Ascending aorta (tissue), 2 donors: ENCODE measurements at regions of chr7 and their contacts with region 1.

Region 1: GRCh38 chr7:30851651-30852307 is 59.9 kb upstream of the AQP1 start:
- DNase-seq: peak; percentile 64 to 93
- H3K4me3 ChIP-seq: peak overlapping the region; percentile 7 to 46
- H3K27ac ChIP-seq: peak overlapping the region; percentile 98
- H3K4me1 ChIP-seq: peaks cover 15 to 57% of the 10 kb centered on the region in 2 donors
- H3K27me3 ChIP-seq: no peaks in the 10 kb centered on the region
- CTCF ChIP-seq: no peak

Region 2: GRCh38 chr7:30750683-30751650 is 100.8 kb before region 1 on chr7:
- intact Hi-C with region 1: no loop called
- DNase-seq: peak in 1 of 2 donors; percentile 88
- H3K4me3 ChIP-seq: peak overlapping the region in 1 of 2 donors; percentile 71
- H3K27ac ChIP-seq: peak overlapping the region; percentile 81 to 91
- H3K4me1 ChIP-seq: peaks cover 2 to 48% of the 10 kb centered on the region in 2 donors
- H3K27me3 ChIP-seq: no peaks in the 10 kb centered on the region
- CTCF ChIP-seq: no peak

Region 3: GRCh38 chr7:30817371-30817767 is 34.4 kb before region 1 on chr7:
- intact Hi-C with region 1: loop called (anchors 2 kb)
- DNase-seq: peak in 1 of 2 donors; percentile 69
- H3K4me3 ChIP-seq: peak overlapping the region in 1 of 2 donors; percentile 11
- H3K27ac ChIP-seq: peak overlapping the region; percentile 95
- H3K4me1 ChIP-seq: peaks cover 24 to 61% of the 10 kb centered on the region in 2 donors
- H3K27me3 ChIP-seq: no peaks in the 10 kb centered on the region
- CTCF ChIP-seq: no peak